Posterior cingulate gyrus (tissue), 11 donors: ENCODE measurements at regions of chr4 and their contacts with region 1.

Region 1: GRCh38 chr4:94595879-94596483 is 144.2 kb downstream of the PDLIM5 start:
- DNase-seq: no peak

Region 2: DNA sequence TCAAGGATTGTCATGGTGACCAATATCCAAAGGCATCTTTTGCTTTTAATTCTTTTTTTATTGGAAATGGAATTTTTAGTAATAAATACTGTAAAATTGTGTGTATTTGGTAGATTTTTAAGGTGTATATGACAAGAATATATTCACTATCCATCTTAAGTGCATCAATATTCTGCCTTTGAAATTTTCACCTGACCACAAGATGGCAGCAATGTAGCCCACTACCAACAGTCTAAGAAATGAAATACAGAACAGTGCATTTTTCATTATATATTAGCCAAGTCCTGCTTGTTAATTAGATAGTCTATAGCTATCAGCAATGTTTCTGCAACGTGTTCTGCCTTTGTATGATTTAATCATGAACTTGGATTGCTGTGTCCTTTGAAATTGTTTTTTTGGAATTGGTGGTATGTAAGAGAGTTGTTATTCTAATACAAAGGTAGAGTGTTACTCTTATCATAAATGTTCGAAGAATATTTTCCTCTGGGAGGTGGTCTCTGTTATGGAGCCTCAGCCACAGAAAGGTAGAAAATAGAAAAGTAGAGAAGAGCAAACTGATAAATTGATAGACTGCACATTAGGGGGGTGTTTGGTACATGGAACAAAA is 291.5 kb before region 1 on chr4:
- intact Hi-C with region 1: loop called (anchors 2 kb)
- DNase-seq: no peak

Region 3: DNA sequence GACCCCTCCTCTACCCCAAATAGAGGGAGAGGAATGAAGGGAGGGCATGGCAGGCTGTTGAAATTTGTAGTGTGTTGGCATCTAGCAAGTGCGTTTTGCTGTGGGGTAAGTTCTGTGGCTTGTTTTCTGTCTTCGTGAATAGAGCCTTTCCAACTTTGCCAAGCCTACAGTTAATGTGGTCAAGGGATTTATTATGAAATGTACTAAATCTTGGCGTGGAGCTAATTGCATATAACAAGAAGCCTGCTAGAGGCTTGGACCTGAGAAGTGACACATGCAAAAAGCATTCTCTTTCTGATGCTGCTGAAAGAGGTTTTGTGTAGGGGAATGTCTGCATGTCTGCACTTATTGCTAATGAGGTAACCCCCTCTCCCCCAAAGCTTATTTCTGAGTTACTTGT is 294.0 kb after region 1 on chr4:
- intact Hi-C with region 1: no loop called
- DNase-seq: no peak